PC-9 (cell line): ENCODE measurements at regions of chr3 and their contacts with region 1.

Region 1: DNA sequence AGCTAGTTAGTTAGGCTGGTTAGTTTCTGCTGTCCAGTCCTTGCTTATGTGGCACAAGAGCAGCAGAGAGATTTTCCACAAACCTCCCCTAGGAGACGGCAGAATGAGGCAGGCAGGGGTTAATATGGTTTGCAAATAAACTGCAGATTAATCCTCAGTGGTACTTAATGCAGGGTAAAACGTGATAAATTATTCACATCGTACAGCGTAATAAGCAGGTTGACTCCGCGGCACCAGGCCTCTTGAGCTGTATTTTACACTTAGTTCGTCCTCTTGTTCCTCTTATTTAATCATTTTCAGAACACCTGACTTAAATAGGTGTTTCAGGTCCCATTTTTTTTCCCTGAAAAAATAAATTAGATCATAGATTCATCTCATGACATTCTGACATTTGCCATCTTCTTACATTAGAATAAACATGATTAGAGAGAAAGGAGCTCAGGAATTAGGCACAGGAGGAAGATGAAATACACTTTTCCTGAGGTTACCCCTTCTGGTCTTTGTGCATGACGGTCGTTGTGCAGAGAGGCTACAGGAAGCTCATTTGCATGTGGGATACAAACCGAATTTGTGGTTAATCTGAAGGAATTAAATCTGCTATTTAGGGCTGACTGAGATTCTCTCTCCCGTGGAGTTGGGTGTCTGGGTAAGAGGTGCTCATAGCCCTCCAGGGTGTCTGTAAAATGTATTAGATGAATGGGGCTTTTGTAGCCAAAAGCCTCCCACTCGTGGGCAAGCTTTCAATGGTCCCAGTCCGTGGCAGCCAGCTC is 27.1 kb upstream of the VPS8 start:
- DNase-seq: no peak
- H3K4me3 ChIP-seq: no peak overlapping the region
- H3K27ac ChIP-seq: no peak overlapping the region
- H3K4me1 ChIP-seq: 0 out of 2 replicates have a peak, but pooled peaks cover 4% of the 10 kb centered on the region
- H3K27me3 ChIP-seq: peaks cover 24% of the 10 kb centered on the region
- CTCF ChIP-seq: no peak

Region 2: GRCh38 chr3:185176750-185177359 is 391.9 kb after region 1 on chr3:
- CTCF ChIA-PET with region 1: interaction called, 10 read pairs
- POLR2A ChIA-PET with region 1: no interaction called
- intact Hi-C with region 1: no loop called
- DNase-seq: peak; percentile 35 to 46
- H3K4me3 ChIP-seq: no peak overlapping the region
- H3K27ac ChIP-seq: no peak overlapping the region
- H3K4me1 ChIP-seq: no peaks in the 10 kb centered on the region
- H3K27me3 ChIP-seq: peaks cover 42% of the 10 kb centered on the region
- CTCF ChIP-seq: peak; percentile 94